Right ventricle myocardium superior (tissue), 1 donor: ENCODE measurements at regions of chr12 and their contacts with region 1.

Region 1: GRCh38 chr12:95789126-95790032 is 1.2 kb downstream of the NTN4 start:
- DNase-seq: peak; percentile 64
- ATAC-seq: peak; percentile 44

Region 2: GRCh38 chr12:95700316-95700785 is 89.0 kb before region 1 on chr12:
- intact Hi-C with region 1: loop called (anchors 10 kb)
- DNase-seq: no peak
- ATAC-seq: no peak